Naive thymus-derived CD4-positive, alpha-beta T cell (primary cell): ENCODE measurements at regions of chr12 and their contacts with region 1.

Region 1: DNA sequence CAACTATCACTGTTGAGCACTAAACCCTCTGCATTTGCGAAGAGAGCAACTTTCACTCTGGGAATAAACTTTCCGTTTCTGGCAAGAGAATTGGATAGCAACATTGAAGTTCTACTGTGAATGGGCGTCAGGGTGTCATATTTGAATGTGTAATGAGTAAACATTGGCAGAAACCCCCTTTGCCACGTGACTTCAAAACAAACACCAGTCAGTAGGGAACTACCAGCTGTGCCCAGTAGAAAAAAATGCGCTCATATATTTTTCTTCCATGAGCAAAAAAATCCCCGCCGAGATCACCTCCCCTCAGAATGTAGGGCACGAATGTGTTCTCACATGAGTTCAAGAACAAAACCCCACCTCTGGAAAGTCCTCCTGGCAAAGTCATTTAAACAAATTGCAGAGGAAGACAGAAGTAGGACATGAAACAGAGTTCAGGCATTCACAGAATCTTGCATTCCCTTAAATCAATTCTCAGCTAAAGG is 80.6 kb downstream of the BTG1 start:
- DNase-seq: peak in 2 of 9 donors; percentile 42 to 74
- ATAC-seq: peak; percentile 84
- H3K4me3 ChIP-seq: no peak overlapping the region
- H3K4me3 Mint-ChIP-seq: peak overlapping the region in 7 of 10 donors; percentile 3 to 58 (median 37)
- H3K27ac ChIP-seq: no peak overlapping the region
- H3K27ac Mint-ChIP-seq: peak overlapping the region in 6 of 9 donors; percentile 27 to 88 (median 52)
- H3K4me1 ChIP-seq: peaks cover 5 to 30% of the 10 kb centered on the region in 2 donors
- H3K4me1 Mint-ChIP-seq: peaks cover 18 to 75% (median 62%) of the 10 kb centered on the region in 7 donors
- H3K27me3 ChIP-seq: no peaks in the 10 kb centered on the region
- H3K27me3 Mint-ChIP-seq: no peaks in the 10 kb centered on the region

Region 2: DNA sequence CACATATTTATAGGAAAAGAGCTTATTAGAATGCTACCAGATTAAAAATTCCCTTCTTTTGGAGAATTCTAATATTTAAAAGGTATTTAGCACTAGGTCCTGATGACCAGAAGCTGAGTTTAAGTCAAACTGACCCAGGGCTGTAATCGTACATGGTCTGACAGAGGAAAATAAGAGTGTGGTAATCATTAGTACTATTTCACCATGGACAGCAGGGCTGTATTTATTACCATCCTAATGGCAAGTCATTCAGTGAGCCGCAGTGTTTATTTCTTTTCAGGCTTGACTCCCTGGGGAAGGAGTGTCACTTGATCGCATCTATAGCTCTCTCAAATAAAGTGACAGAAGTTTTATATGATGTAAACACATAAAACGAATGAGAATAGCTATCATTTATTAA is 181.3 kb before region 1 on chr12:
- CTCF ChIA-PET with region 1: no interaction called
- POLR2A ChIA-PET with region 1: no interaction called
- intact Hi-C with region 1: no loop called
- DNase-seq: no peak
- ATAC-seq: no peak
- H3K4me3 ChIP-seq: no peak overlapping the region
- H3K4me3 Mint-ChIP-seq: no peak overlapping the region
- H3K27ac ChIP-seq: no peak overlapping the region
- H3K27ac Mint-ChIP-seq: no peak overlapping the region
- H3K4me1 ChIP-seq: peaks cover 16 to 18% of the 10 kb centered on the region in 2 donors
- H3K4me1 Mint-ChIP-seq: peaks cover 16 to 48% (median 40%) of the 10 kb centered on the region in 7 donors
- H3K27me3 ChIP-seq: no peaks in the 10 kb centered on the region
- H3K27me3 Mint-ChIP-seq: peaks cover 0 to 3% (median 0%) of the 10 kb centered on the region in 5 donors

Region 3: GRCh38 chr12:91985002-91985787 is 79.9 kb before region 1 on chr12:
- CTCF ChIA-PET with region 1: no interaction called
- POLR2A ChIA-PET with region 1: no interaction called
- intact Hi-C with region 1: no loop called
- DNase-seq: no peak
- ATAC-seq: peak; percentile 48
- H3K4me3 ChIP-seq: no peak overlapping the region
- H3K4me3 Mint-ChIP-seq: peak overlapping the region in 2 of 10 donors; percentile 5 to 25
- H3K27ac ChIP-seq: no peak overlapping the region
- H3K27ac Mint-ChIP-seq: peak overlapping the region in 7 of 9 donors; percentile 13 to 81 (median 73)
- H3K4me1 ChIP-seq: peaks cover 0 to 18% of the 10 kb centered on the region in 2 donors
- H3K4me1 Mint-ChIP-seq: peaks cover 15 to 83% (median 67%) of the 10 kb centered on the region in 7 donors
- H3K27me3 ChIP-seq: no peaks in the 10 kb centered on the region
- H3K27me3 Mint-ChIP-seq: no peaks in the 10 kb centered on the region

Region 4: GRCh38 chr12:92049403-92049802 is 15.7 kb before region 1 on chr12:
- CTCF ChIA-PET with region 1: interaction called, 3 read pairs
- POLR2A ChIA-PET with region 1: interaction called, 6 read pairs
- intact Hi-C with region 1: loop called in 1 of 2 experiments (anchors 1 kb)
- DNase-seq: no peak
- ATAC-seq: no peak
- H3K4me3 ChIP-seq: no peak overlapping the region
- H3K4me3 Mint-ChIP-seq: peak overlapping the region in 1 of 10 donors; percentile 34
- H3K27ac ChIP-seq: no peak overlapping the region
- H3K27ac Mint-ChIP-seq: peak overlapping the region in 4 of 9 donors; percentile 14 to 99 (median 74)
- H3K4me1 ChIP-seq: peaks cover 0 to 34% of the 10 kb centered on the region in 2 donors
- H3K4me1 Mint-ChIP-seq: peaks cover 26 to 89% (median 80%) of the 10 kb centered on the region in 7 donors
- H3K27me3 ChIP-seq: no peaks in the 10 kb centered on the region
- H3K27me3 Mint-ChIP-seq: no peaks in the 10 kb centered on the region

Region 5: GRCh38 chr12:92735131-92735721 is 670.2 kb after region 1 on chr12:
- CTCF ChIA-PET with region 1: no interaction called
- POLR2A ChIA-PET with region 1: no interaction called
- intact Hi-C with region 1: no loop called
- DNase-seq: no peak
- ATAC-seq: no peak
- H3K4me3 ChIP-seq: no peak overlapping the region
- H3K4me3 Mint-ChIP-seq: no peak overlapping the region
- H3K27ac ChIP-seq: no peak overlapping the region
- H3K27ac Mint-ChIP-seq: peak overlapping the region in 2 of 9 donors; percentile 2 to 18
- H3K4me1 ChIP-seq: no peaks in the 10 kb centered on the region
- H3K4me1 Mint-ChIP-seq: peaks cover 0 to 29% (median 14%) of the 10 kb centered on the region in 7 donors
- H3K27me3 ChIP-seq: no peaks in the 10 kb centered on the region
- H3K27me3 Mint-ChIP-seq: peaks cover 0 to 9% (median 3%) of the 10 kb centered on the region in 5 donors